ENCODE measurements at regions of chr16 and their contacts with region 1.

Region 1: DNA sequence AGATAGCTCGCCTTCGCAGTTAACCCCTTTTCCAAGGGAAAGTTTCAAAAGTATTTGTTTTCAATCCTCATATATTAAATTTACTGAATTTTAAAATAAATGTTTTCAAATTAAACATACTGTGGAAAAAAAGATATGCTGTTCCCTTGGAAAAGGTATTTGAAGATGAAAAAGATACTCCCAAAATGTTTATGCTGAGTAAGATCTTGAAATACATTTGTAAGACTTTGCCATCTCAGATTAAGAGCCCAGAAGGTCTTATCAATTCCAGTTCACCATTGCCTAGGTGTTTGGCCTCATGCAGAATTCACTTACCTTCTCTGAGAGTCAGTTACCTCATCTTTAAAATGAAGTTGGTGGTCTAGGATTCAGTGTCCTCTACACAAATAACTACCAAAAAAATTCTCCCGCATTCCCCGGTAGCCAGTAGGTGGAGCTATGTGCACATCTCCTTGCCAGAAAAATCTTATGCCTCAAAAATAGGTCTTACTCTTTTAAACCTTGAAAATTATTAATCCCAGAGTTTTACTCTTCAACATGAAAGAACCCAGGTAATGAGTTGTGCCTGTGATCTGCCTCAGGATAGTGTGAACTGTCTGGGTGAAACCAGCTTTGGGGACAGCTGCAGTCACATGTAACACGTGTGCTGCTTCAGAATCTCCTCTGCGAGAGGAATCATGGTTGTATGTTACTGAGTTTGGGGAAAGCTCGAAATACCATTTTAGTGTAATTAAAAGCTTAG is 178.3 kb downstream of the MRTFB start:
- DNase-seq: peak; percentile 10 to 67 (median 51)
- ATAC-seq: no peak
- H3K4me3 ChIP-seq: no peak overlapping the region
- H3K4me3 Mint-ChIP-seq: no peak overlapping the region
- H3K27ac ChIP-seq: no peak overlapping the region
- H3K27ac Mint-ChIP-seq: no peak overlapping the region
- H3K4me1 ChIP-seq: no peaks in the 10 kb centered on the region
- H3K4me1 Mint-ChIP-seq: no peaks in the 10 kb centered on the region
- H3K27me3 ChIP-seq: no peaks in the 10 kb centered on the region
- H3K27me3 Mint-ChIP-seq: no peaks in the 10 kb centered on the region
- CTCF ChIP-seq: peak; percentile 83

Region 2: DNA sequence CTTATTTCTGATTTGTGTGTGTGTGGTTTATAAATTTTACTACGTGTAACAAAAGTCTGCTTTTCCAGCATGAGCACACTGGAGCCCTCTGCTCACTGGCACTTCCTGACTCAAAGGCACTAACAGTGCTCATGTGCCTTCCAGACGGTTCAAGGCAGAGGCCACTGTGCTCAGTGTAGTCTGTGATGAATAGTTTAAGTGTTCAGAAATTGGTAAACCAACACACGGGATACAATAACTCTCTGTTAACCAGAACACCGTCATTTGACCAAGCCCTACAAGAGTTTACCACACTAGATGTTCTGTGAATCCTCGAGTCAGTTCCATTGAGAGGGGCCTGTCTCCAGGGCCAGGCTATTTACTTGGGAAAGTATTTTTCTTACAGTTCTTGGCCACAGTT is 13.5 kb after region 1 on chr16:
- CTCF ChIA-PET with region 1: interaction called, 15 read pairs
- POLR2A ChIA-PET with region 1: no interaction called
- intact Hi-C with region 1: no loop called
- DNase-seq: no peak
- ATAC-seq: no peak
- H3K4me3 ChIP-seq: no peak overlapping the region
- H3K4me3 Mint-ChIP-seq: no peak overlapping the region
- H3K27ac ChIP-seq: no peak overlapping the region
- H3K27ac Mint-ChIP-seq: no peak overlapping the region
- H3K4me1 ChIP-seq: no peaks in the 10 kb centered on the region
- H3K4me1 Mint-ChIP-seq: no peaks in the 10 kb centered on the region
- H3K27me3 ChIP-seq: no peaks in the 10 kb centered on the region
- H3K27me3 Mint-ChIP-seq: no peaks in the 10 kb centered on the region
- CTCF ChIP-seq: no peak

Region 3: DNA sequence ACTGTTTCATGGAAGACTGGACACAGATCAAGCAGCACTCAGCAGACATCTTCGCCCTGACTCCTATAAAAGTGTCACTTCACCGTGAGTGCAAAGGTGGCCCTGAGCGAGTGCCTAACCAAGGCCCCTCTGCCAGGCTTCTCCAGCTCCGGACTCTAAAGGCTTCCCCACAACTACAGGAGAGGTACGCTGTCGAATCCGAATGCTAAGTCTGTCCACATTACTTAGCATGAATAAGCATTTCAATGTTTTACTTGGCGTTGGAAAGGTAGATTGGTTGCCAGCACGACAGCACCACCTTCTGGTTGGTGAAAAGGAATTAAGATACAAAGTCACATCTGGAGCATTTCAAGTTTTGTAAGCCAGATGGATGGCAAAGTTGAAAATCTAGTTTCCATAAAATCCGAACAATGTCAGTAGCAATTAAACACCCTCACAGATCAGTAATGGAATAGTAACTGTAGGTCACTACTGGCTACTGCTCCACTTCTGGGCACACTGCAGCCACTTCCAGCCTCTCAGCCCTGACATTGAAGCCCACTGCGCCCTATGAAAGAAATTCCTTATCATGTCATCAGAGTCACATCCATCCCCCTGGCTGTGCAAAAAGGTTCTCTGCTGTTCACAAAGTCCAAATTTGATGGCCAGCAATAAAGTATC is 279.7 kb after region 1 on chr16:
- CTCF ChIA-PET with region 1: interaction called, 22 read pairs
- POLR2A ChIA-PET with region 1: no interaction called
- intact Hi-C with region 1: loop called (anchors 1 kb)
- DNase-seq: peak; percentile 10 to 72 (median 48)
- ATAC-seq: peak; percentile 40
- H3K4me3 ChIP-seq: no peak overlapping the region
- H3K4me3 Mint-ChIP-seq: no peak overlapping the region
- H3K27ac ChIP-seq: no peak overlapping the region
- H3K27ac Mint-ChIP-seq: no peak overlapping the region
- H3K4me1 ChIP-seq: no peaks in the 10 kb centered on the region
- H3K4me1 Mint-ChIP-seq: no peaks in the 10 kb centered on the region
- H3K27me3 ChIP-seq: no peaks in the 10 kb centered on the region
- H3K27me3 Mint-ChIP-seq: no peaks in the 10 kb centered on the region
- CTCF ChIP-seq: peak; percentile 73

Region 4: GRCh38 chr16:14600164-14600563 is 350.7 kb after region 1 on chr16:
- CTCF ChIA-PET with region 1: interaction called, 8 read pairs
- POLR2A ChIA-PET with region 1: no interaction called
- intact Hi-C with region 1: loop called in 1 of 2 experiments (anchors 1 kb)
- DNase-seq: peak in 2 of 9 experiments; percentile 20 to 39
- ATAC-seq: no peak
- H3K4me3 ChIP-seq: no peak overlapping the region
- H3K4me3 Mint-ChIP-seq: no peak overlapping the region
- H3K27ac ChIP-seq: no peak overlapping the region
- H3K27ac Mint-ChIP-seq: no peak overlapping the region
- H3K4me1 ChIP-seq: no peaks in the 10 kb centered on the region
- H3K4me1 Mint-ChIP-seq: no peaks in the 10 kb centered on the region
- H3K27me3 ChIP-seq: no peaks in the 10 kb centered on the region
- H3K27me3 Mint-ChIP-seq: no peaks in the 10 kb centered on the region
- CTCF ChIP-seq: peak; percentile 62

Measured in CD8-positive, alpha-beta T cell (primary cell).